ENCODE measurements at regions of chr2 and their contacts with region 1.

Region 1: GRCh38 chr2:17830053-17831034 is 14.1 kb downstream of the MSGN1 start:
- ATAC-seq: peak; percentile 98 to 100 (median 100)
- H3K4me3 ChIP-seq: peak overlapping the region in 1 of 5 donors; percentile 12
- H3K27ac ChIP-seq: no peak overlapping the region
- H3K4me1 ChIP-seq: no peaks in the 10 kb centered on the region

Region 2: GRCh38 chr2:16713011-16713423 is 1117.3 kb before region 1 on chr2:
- in situ Hi-C with region 1: no loop called
- ATAC-seq: peak; percentile 79 to 97 (median 94)
- H3K4me3 ChIP-seq: no peak overlapping the region
- H3K27ac ChIP-seq: no peak overlapping the region
- H3K4me1 ChIP-seq: peaks cover 6 to 14% of the 10 kb centered on the region in 2 donors

Region 3: GRCh38 chr2:17719562-17720371 is 110.6 kb before region 1 on chr2:
- in situ Hi-C with region 1: loop called in 1 of 9 experiments (anchors 25 kb)
- ATAC-seq: no peak
- H3K4me3 ChIP-seq: no peak overlapping the region
- H3K27ac ChIP-seq: no peak overlapping the region
- H3K4me1 ChIP-seq: no peaks in the 10 kb centered on the region

Region 4: DNA sequence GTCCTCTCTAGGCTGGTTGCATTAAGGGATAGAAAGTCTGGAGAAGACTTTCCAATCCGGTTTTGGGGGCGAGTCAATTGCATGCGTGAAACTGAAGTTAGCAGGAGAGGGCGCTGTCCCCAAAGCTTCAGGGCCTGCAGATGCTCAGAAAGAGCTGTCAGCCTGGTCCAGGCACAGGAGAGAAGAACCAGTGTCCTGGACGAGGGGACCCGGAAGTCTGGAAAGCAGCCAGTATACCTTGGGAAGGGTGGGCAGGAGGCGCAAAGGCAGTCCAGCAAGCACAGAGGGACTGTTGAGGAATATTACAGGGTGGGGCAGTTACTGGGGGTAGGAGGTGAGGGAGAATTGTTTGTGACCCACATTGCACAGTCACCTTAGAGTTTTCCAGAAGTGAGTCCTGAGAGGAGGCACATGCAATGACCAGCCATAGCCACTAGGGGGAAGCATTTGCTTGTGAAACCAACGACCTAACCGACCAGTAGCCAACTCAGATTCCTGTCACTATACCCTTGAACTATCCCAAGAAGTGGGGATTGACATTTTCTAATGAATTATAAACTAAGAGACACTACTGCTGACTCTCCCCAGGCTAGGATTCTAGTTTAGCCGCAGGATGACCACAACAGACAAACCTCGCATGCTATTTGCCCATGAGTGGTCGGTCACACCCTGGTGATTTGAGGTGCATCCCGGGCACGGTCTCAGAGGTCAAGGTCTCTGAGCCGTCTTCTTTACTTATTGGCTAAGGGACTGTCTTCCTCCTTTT is 557.3 kb after region 1 on chr2:
- in situ Hi-C with region 1: loop called in 2 of 9 experiments (anchors 25 kb)
- ATAC-seq: peak; percentile 77 to 98 (median 91)
- H3K4me3 ChIP-seq: no peak overlapping the region
- H3K27ac ChIP-seq: no peak overlapping the region
- H3K4me1 ChIP-seq: peaks cover 0 to 4% of the 10 kb centered on the region in 2 donors

Measured in motor neuron (in vitro differentiated cells).